OCI-LY7 (cell line): ENCODE measurements at regions of chr14 and their contacts with region 1.

Region 1: GRCh38 chr14:58244556-58245387 is at the start of gene PSMA3:
- DNase-seq: peak; percentile 97
- H3K4me3 ChIP-seq: peak within 1 kb of the TSS; percentile 92
- H3K27ac ChIP-seq: peak within 1 kb of the TSS; percentile 88
- H3K4me1 ChIP-seq: peaks cover 33% of the 10 kb centered on the region
- CTCF ChIP-seq: no peak
- total RNA-seq, gene PSMA3: 88.9 and 89.1 TPM in 2 replicates

Region 2: GRCh38 chr14:58199726-58200479 is 44.9 kb before region 1 on chr14 and contains the start of gene ACTR10:
- CTCF ChIA-PET with region 1: no interaction called
- POLR2A ChIA-PET with region 1: interaction called, 3 read pairs
- intact Hi-C with region 1: loop called (anchors 1 kb)
- DNase-seq: peak; percentile 91
- H3K4me3 ChIP-seq: peak within 1 kb of the TSS; percentile 95
- H3K27ac ChIP-seq: peak within 1 kb of the TSS; percentile 59
- H3K4me1 ChIP-seq: peaks cover 18% of the 10 kb centered on the region
- CTCF ChIP-seq: no peak
- total RNA-seq, gene ACTR10: 34.3 and 42.5 TPM in 2 replicates

Region 3: GRCh38 chr14:58227096-58227819 is 17.5 kb before region 1 on chr14:
- CTCF ChIA-PET with region 1: no interaction called
- POLR2A ChIA-PET with region 1: no interaction called
- intact Hi-C with region 1: no loop called
- DNase-seq: no peak
- H3K4me3 ChIP-seq: no peak overlapping the region
- H3K27ac ChIP-seq: no peak overlapping the region
- H3K4me1 ChIP-seq: no peaks in the 10 kb centered on the region
- CTCF ChIP-seq: no peak